ENCODE measurements at regions of chr5 and their contacts with region 1.

Region 1: DNA sequence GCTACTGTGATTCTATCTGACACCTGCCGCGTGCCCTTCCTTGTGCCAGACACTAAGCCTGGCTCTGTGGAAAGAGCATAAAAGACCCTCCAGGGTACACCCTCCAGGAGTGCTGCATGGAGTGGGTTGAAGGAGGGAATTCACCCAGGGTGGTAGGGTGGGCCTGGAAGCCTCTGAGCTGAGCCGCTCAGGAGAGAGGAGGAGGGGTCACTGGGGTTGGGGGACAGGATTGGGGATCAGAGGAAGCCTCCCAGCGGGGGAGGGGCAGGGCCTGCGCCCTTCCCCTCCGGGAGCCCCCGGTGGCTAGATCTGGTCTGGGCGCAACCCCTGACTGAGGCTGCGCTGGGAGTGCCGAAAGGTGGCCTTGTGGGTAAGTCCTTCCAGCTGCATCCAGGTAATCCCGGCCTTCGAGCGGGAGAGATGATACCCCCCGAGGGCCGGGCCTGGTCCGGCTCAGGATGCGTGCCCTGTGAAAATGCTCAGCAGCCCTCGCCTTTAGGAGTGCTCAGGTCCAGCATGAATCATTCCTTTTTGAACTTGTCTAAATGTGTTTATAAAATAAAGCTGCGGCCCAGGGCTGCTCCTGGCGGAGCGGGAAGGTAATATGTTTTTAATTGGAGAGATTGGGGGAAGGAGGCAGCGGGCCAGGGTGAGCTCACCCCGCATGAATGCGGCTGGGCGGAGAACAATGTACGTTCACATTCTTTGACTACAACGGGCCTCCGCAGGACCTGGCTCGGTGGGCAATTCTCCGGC is 118.1 kb upstream of the SMIM23 start:
- DNase-seq: peak; percentile 88
- H3K4me3 ChIP-seq: no peak overlapping the region
- H3K27ac ChIP-seq: peak overlapping the region; percentile 78
- H3K4me1 ChIP-seq: peaks cover 12% of the 10 kb centered on the region
- H3K27me3 ChIP-seq: no peaks in the 10 kb centered on the region
- CTCF ChIP-seq: peak; percentile 12 to 22
- POLR2A ChIP-seq: no peak

Region 2: GRCh38 chr5:171681677-171682076 is 14.2 kb after region 1 on chr5:
- CTCF ChIA-PET with region 1: interaction called, 9 read pairs
- POLR2A ChIA-PET with region 1: interaction called, 4 read pairs
- dilution Hi-C with region 1: no loop called
- intact Hi-C with region 1: loop called (anchors 1 kb)
- DNase-seq: peak; percentile 62
- H3K4me3 ChIP-seq: no peak overlapping the region
- H3K27ac ChIP-seq: peak overlapping the region; percentile 43
- H3K4me1 ChIP-seq: peaks cover 8% of the 10 kb centered on the region
- H3K27me3 ChIP-seq: no peaks in the 10 kb centered on the region
- CTCF ChIP-seq: no peak
- POLR2A ChIP-seq: no peak

Region 3: DNA sequence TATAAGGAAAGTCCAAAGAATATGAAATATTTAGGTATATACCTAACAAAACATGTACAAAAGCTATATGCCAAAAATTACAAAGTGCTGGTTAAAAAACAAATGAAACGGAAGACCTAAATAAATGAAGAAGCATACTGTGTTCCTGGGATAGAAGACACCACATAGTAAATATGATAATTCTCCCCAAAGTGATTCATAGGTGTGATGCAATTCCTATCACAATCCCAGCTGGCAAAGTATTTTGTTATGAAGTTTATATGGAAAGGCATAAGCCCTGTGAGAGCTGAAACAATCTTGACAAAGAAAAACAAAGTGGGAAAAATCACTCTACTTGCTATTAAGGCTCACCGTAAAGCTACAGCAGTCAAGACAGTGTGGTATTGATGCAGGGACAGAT is 115.5 kb after region 1 on chr5:
- CTCF ChIA-PET with region 1: no interaction called
- POLR2A ChIA-PET with region 1: no interaction called
- dilution Hi-C with region 1: no loop called
- intact Hi-C with region 1: loop called (anchors 1 kb)
- DNase-seq: no peak
- H3K4me3 ChIP-seq: no peak overlapping the region
- H3K27ac ChIP-seq: no peak overlapping the region
- H3K4me1 ChIP-seq: no peaks in the 10 kb centered on the region
- H3K27me3 ChIP-seq: peaks cover 3 to 8% of the 10 kb centered on the region in 2 experiments
- CTCF ChIP-seq: no peak
- POLR2A ChIP-seq: no peak

Region 4: DNA sequence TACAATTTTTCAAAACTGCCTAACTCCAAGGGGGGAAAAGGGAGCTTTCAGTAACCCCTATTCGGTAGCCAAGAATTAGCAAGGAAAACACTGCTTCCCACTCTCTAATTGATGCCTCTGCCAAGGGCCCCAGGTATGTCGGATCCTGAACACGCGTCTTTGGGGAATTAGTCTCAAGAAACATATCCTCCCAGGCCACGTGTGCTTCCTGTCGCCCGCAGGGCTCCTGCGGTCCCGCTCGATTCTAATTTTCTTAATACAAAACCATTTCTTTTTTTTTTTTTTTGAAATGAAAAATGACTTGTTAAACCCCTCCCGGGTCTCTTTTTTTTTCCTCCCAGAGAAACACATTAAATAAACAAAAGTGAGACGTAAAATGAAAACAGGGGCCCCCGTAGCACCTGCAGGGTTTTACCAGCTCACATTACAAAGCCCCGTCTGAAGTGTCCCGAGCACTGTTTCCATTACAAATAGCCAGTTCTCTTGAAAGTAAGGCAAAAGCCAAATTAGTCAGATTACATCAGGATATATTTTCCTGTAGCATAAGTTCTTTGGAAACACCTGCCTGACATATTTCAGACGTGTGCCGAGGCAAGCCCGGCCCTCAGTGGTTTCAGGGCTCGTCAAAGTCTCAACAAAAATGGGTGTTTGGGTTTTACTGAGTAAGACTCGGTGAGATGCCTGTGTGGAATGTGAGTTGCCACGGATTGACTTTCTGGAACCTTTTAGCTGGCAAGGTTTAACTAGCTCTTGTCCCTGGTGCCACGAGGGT is 139.6 kb after region 1 on chr5:
- CTCF ChIA-PET with region 1: no interaction called
- POLR2A ChIA-PET with region 1: no interaction called
- dilution Hi-C with region 1: no loop called
- intact Hi-C with region 1: no loop called
- DNase-seq: no peak
- H3K4me3 ChIP-seq: no peak overlapping the region
- H3K27ac ChIP-seq: no peak overlapping the region
- H3K4me1 ChIP-seq: no peaks in the 10 kb centered on the region
- H3K27me3 ChIP-seq: peaks cover 8 to 18% of the 10 kb centered on the region in 2 experiments
- CTCF ChIP-seq: no peak
- POLR2A ChIP-seq: no peak

Measured in endothelial cell of umbilical vein (primary cell).